Activated CD4-positive, alpha-beta T cell treated with anti-CD3 and anti-CD28 coated beads for 36 hours (primary cell): ENCODE measurements at regions of chr10 and their contacts with region 1.

Region 1: DNA sequence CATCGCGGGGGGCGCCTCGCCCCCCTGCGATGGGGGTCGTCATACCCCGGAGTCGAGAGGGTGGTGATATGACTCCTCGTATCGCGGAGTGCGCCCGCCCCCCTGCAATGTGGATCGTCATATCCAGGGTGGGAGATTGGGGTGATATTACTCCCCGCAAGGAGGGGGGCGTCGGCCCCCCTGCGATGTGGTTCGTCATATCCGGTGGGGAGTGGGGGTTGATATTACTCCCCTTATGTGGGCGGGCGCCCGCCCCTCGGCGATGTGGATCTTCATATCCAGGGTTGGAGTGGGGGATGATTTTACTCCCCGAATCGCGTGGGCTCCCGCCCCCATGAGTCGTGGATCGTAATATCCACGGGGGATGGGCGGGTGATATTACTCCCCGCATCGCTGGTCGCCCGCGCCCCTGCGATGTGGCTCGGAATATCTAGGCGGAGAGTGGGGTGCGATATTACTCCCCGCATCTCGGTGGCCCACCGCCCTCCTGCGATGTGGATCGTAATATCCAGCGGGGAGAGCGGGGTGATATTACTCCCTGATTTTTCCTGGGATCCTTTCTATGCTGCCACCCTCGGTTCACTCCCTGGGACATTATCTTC is 36.9 kb downstream of the MEIG1 start:
- DNase-seq: no peak
- ATAC-seq: no peak
- H3K4me3 Mint-ChIP-seq: no peak overlapping the region
- H3K27ac Mint-ChIP-seq: no peak overlapping the region
- H3K4me1 Mint-ChIP-seq: peaks cover 9% of the 10 kb centered on the region
- H3K27me3 Mint-ChIP-seq: peaks cover 1% of the 10 kb centered on the region

Region 2: DNA sequence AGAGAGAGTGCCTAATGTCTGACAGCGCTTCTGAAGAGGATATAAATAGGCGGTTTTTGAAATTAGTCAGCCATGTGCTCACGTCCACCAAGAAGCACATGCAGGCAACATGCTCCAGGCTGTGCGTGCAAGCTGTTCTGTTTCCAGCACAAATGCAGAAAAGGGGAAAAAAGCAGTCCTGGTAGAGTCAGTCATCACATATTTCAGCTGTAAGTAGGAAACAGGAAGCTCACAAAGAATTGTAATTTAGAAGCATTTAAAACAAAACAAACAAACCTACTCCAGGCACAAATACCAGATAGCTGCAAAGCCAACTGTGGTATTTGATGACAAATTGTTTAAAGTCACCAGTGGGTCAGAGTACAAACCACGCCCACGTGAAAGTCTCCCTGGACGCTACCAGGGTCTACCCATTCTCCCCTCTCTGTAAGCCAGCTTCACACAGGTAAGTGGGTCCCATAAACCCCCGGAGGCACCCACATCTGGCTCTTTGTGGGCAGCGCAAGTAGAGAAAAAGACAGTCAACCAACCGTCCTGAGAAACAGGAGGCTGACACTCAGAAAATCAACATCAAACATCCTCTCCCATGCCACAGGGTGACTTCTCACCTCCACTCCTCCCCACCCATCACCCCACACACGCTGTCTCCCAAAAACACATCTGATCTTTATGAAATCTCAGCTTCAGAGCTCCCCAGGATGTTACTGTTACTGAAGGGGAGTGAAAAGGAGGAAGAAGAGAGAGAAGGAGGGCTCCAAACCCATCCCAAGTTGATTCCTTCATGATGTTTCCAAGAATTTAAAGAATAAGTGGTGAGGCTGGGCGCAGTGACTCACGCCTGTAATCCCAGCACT is 407.8 kb before region 1 on chr10:
- CTCF ChIA-PET with region 1: no interaction called
- POLR2A ChIA-PET with region 1: no interaction called
- intact Hi-C with region 1: no loop called
- DNase-seq: peak; percentile 77
- ATAC-seq: peak; percentile 70
- H3K4me3 Mint-ChIP-seq: peak overlapping the region; percentile 40
- H3K27ac Mint-ChIP-seq: peak overlapping the region; percentile 89
- H3K4me1 Mint-ChIP-seq: peaks cover 93% of the 10 kb centered on the region
- H3K27me3 Mint-ChIP-seq: no peaks in the 10 kb centered on the region

Region 3: DNA sequence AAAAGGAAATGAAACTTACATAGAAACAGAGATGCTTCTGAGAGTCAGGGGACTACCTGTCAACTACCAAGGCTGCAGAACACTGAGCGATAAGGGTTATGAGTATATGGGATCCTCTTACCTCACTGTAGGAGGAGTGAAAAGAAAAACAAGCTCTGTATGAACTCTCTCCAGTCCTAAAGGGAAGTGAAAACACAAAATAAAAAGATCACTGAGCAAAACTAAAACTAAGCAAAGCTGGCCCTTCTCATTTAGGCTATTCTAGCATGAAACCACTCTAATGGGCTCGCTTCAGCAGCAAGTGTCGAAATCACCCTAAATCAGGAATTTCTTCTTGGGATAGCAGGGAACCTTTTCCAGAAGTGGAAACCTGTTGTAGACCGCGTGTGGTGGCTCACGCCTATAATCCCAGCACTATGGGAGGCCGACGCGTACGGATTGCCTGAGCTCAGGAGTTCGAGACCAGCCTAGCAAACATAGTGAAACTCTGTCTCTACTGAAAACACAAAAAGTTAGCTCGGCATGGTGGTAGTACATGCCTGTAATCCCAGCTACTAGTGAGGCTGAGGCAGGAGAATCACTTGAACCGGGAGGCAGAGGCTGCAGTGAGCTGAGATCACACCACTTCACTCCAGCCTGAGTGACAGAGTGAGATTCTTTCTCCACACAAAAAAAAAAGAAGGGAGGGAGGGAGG is 69.2 kb before region 1 on chr10:
- CTCF ChIA-PET with region 1: no interaction called
- POLR2A ChIA-PET with region 1: no interaction called
- intact Hi-C with region 1: no loop called
- DNase-seq: no peak
- ATAC-seq: no peak
- H3K4me3 Mint-ChIP-seq: no peak overlapping the region
- H3K27ac Mint-ChIP-seq: no peak overlapping the region
- H3K4me1 Mint-ChIP-seq: no peaks in the 10 kb centered on the region
- H3K27me3 Mint-ChIP-seq: no peaks in the 10 kb centered on the region

Region 4: DNA sequence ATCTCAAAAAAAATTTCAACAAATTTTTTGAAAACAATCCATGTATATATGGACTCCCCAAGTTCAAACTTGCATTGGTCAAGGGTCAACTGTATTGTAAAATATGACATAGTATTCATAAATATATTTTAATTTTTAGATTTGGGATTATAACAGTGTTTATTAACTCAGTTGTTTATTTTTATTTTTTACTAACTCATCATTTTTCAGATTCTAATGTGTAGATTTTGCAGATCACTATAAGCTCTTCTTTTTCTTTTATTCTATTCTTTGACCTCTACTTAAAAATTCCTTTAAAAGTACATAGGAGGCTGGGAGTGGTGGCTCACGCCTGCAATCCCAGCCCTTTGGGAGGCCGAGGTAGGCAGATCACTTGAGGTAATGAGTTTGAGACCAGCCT is 28.2 kb before region 1 on chr10:
- CTCF ChIA-PET with region 1: no interaction called
- POLR2A ChIA-PET with region 1: no interaction called
- intact Hi-C with region 1: no loop called
- DNase-seq: no peak
- ATAC-seq: no peak
- H3K4me3 Mint-ChIP-seq: no peak overlapping the region
- H3K27ac Mint-ChIP-seq: no peak overlapping the region
- H3K4me1 Mint-ChIP-seq: no peaks in the 10 kb centered on the region
- H3K27me3 Mint-ChIP-seq: no peaks in the 10 kb centered on the region

Region 5: GRCh38 chr10:15088428-15089261 is 92.6 kb after region 1 on chr10 and contains the start of gene ACBD7:
- CTCF ChIA-PET with region 1: no interaction called
- POLR2A ChIA-PET with region 1: no interaction called
- intact Hi-C with region 1: loop called (anchors 1 to 5 kb)
- DNase-seq: peak; percentile 91
- ATAC-seq: peak; percentile 91
- H3K4me3 Mint-ChIP-seq: peak within 1 kb of the TSS; percentile 67
- H3K27ac Mint-ChIP-seq: no peak within 1 kb of the TSS
- H3K4me1 Mint-ChIP-seq: peaks cover 19% of the 10 kb centered on the region
- H3K27me3 Mint-ChIP-seq: no peaks in the 10 kb centered on the region
- total RNA-seq, gene ACBD7: 2.4 to 2.6 TPM

Region 6: DNA sequence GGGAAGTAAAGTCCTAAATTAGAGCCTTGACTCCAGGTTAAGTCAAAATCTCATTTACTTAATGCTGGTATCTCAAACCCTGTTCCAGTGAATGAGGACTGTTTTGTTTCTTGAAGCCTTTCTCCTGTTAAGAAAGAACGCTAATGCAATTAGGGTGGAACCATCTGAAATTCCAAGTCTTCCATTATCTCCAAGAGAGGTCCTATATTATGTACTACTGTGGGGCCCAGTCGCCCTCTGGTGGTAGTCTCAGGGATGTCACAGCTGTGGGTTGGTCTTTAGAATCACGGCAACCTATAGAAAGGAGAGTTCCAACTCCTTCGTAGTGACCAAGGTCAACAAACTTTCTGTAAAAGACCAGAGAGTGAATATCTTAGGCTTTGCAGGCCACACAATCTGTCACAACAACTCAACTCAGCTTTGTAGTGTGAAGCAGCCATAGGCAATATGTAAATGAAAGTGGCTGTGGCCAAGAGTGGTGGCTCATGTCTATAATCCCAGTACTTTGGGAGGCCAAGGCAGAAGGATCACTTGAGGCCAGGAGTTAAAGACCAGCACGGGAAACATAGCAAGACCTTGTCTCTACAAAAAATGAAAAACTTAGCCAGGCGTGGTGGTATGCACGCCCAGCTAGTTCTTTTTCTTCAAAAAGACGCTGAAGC is 110.4 kb after region 1 on chr10:
- CTCF ChIA-PET with region 1: interaction called, 3 read pairs
- POLR2A ChIA-PET with region 1: no interaction called
- intact Hi-C with region 1: loop called (anchors 1 kb)
- DNase-seq: peak; percentile 81
- ATAC-seq: peak; percentile 98
- H3K4me3 Mint-ChIP-seq: no peak overlapping the region
- H3K27ac Mint-ChIP-seq: peak overlapping the region; percentile 58
- H3K4me1 Mint-ChIP-seq: peaks cover 9% of the 10 kb centered on the region
- H3K27me3 Mint-ChIP-seq: no peaks in the 10 kb centered on the region

Region 7: GRCh38 chr10:15370856-15371701 is 375.0 kb after region 1 on chr10 and contains the start of gene FAM171A1:
- CTCF ChIA-PET with region 1: no interaction called
- POLR2A ChIA-PET with region 1: no interaction called
- intact Hi-C with region 1: loop called (anchors 1 to 5 kb)
- DNase-seq: peak; percentile 85
- ATAC-seq: peak; percentile 82
- H3K4me3 Mint-ChIP-seq: peak within 1 kb of the TSS; percentile 67
- H3K27ac Mint-ChIP-seq: peak within 1 kb of the TSS; percentile 68
- H3K4me1 Mint-ChIP-seq: peaks cover 16% of the 10 kb centered on the region
- H3K27me3 Mint-ChIP-seq: peaks cover 14% of the 10 kb centered on the region
- total RNA-seq, gene FAM171A1: 4.1 to 5.8 TPM